ENCODE measurements at regions of chr1 and their contacts with region 1.

Region 1: GRCh38 chr1:67766141-67766978 is 66.9 kb downstream of the GNG12 start:
- DNase-seq: no peak
- H3K4me3 ChIP-seq: peak overlapping the region; percentile 24 to 50 (median 40)
- H3K27ac ChIP-seq: peak overlapping the region; percentile 54 to 68 (median 64)
- H3K4me1 ChIP-seq: peaks cover 17 to 56% (median 39%) of the 10 kb centered on the region in 4 donors
- H3K27me3 ChIP-seq: no peaks in the 10 kb centered on the region
- CTCF ChIP-seq: peak; percentile 78 to 80 (median 78)
- EP300 ChIP-seq: no peak
- POLR2A ChIP-seq: no peak

Region 2: DNA sequence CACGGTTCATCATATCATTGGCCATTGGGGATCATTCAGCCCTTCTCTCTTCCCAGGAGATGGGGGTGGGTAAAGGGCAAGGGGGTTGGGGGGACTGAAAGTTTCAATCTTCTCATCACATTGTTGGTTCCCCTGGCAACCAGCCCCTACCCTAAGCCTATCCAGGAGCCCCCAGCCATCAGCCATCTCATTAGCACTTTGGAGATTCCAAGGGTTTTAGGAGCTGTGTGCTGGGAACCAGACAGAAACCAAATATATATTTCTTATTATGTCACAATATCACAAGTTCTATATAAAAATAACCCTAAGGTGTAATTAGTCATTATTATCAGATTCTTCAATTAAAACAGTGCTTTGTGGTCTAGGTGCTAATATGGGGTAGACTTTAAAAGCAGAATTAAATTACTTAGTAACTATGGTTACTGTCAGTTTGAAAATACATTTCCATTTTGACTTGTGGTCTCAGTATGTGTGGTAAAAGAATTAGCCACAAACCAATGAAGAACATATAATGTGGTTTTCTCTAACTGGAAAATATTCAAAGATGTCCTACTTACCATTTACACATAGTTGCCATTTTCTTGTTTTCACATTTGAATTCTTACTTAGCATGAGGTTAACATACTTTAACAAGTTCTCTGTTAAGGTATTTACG is 572.0 kb before region 1 on chr1:
- intact Hi-C with region 1: no loop called
- DNase-seq: no peak
- H3K4me3 ChIP-seq: no peak overlapping the region
- H3K27ac ChIP-seq: no peak overlapping the region
- H3K4me1 ChIP-seq: no peaks in the 10 kb centered on the region
- H3K27me3 ChIP-seq: no peaks in the 10 kb centered on the region
- CTCF ChIP-seq: no peak
- EP300 ChIP-seq: no peak
- POLR2A ChIP-seq: no peak

Region 3: GRCh38 chr1:67832737-67833601 is 66.6 kb after region 1 on chr1 and contains the start of gene GNG12:
- intact Hi-C with region 1: loop called (anchors 5 kb)
- DNase-seq: no peak
- H3K4me3 ChIP-seq: peak within 1 kb of the TSS; percentile 70 to 91 (median 80)
- H3K27ac ChIP-seq: peak within 1 kb of the TSS; percentile 91 to 93 (median 92)
- H3K4me1 ChIP-seq: peaks cover 16 to 34% (median 23%) of the 10 kb centered on the region in 4 donors
- H3K27me3 ChIP-seq: no peaks in the 10 kb centered on the region
- CTCF ChIP-seq: no peak
- EP300 ChIP-seq: no peak
- POLR2A ChIP-seq: no peak
- total RNA-seq, gene GNG12: 108 to 118 (median 111) TPM

Region 4: GRCh38 chr1:67853704-67854103 is 87.3 kb after region 1 on chr1:
- intact Hi-C with region 1: loop called (anchors 5 kb)
- DNase-seq: no peak
- H3K4me3 ChIP-seq: no peak overlapping the region
- H3K27ac ChIP-seq: no peak overlapping the region
- H3K4me1 ChIP-seq: peaks cover 8 to 27% (median 17%) of the 10 kb centered on the region in 4 donors
- H3K27me3 ChIP-seq: no peaks in the 10 kb centered on the region
- CTCF ChIP-seq: peak; percentile 54 to 70 (median 56)
- EP300 ChIP-seq: no peak
- POLR2A ChIP-seq: no peak

Region 5: DNA sequence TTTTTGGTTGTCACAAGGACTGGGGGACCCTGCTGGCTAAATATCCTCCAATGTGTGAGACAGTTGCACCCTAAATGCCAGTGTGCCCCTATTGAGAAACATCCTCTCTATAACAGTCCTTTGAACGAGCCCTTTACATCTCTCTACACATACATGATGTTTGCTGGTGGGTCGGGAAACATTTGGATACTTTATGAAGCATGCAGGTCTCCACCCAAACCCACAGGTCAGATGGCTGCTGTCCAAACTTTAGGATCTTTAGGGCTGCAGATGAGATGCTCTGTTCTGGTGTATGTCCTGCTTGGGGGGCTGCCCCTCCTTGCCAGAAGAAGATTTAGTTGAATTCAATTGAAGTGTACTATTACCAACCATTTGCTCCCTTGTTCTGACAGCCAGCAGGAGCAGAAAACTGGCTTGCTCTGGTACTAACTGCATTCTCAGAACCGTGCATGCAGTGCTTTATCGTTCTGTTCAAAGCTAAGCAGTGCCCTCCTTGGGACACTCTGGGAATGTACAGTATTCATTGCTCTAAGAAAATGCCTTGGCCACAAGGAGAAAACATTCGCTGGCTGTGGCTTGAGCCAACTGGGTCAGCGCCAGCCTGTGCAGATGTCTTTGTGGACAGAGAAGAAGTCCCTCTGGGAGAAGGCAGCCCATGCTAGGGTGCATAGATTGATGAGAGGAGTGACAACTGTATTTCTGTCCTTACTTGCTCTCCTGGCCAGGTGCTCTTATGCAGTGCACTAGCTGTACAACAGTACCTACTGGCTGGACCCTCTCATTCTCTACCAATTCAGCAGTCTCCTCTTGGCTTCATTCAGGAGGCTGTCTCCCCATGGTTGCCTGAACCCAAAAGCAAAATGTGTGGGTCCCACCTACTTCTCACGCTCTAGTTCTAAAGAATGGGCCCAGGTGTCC is 345.4 kb after region 1 on chr1:
- intact Hi-C with region 1: loop called (anchors 5 kb)
- DNase-seq: peak; percentile 92
- H3K4me3 ChIP-seq: no peak overlapping the region
- H3K27ac ChIP-seq: peak overlapping the region in 3 of 4 donors; percentile 24 to 53 (median 49)
- H3K4me1 ChIP-seq: peaks cover 16 to 34% (median 27%) of the 10 kb centered on the region in 4 donors
- H3K27me3 ChIP-seq: no peaks in the 10 kb centered on the region
- CTCF ChIP-seq: peak; percentile 64 to 81 (median 70)
- EP300 ChIP-seq: no peak
- POLR2A ChIP-seq: no peak

Region 6: GRCh38 chr1:68173911-68174737 is 407.8 kb after region 1 on chr1:
- intact Hi-C with region 1: no loop called
- DNase-seq: no peak
- H3K4me3 ChIP-seq: peak overlapping the region; percentile 21 to 39 (median 27)
- H3K27ac ChIP-seq: peak overlapping the region; percentile 75 to 82 (median 78)
- H3K4me1 ChIP-seq: peaks cover 57 to 85% (median 81%) of the 10 kb centered on the region in 4 donors
- H3K27me3 ChIP-seq: no peaks in the 10 kb centered on the region
- CTCF ChIP-seq: no peak
- EP300 ChIP-seq: no peak
- POLR2A ChIP-seq: no peak

Region 7: DNA sequence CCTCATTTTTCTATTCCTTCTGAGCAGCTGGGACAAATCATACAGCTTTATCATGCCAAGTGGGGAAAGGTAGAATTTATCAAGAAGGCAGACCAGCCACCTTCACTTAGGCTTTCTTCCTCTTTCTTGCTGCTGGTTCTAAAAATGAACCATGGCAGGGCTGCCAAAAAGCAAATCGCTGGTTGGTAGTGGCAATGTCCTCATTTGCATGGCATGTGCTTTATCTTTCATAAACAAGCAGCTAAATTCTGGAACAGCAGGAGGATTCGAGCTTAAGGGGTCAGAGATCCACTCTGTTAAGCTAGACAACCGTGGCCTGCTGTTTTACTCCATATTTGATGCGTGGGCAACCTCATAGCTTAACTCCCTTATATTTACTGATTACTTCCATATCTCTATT is 592.1 kb after region 1 on chr1:
- intact Hi-C with region 1: no loop called
- DNase-seq: no peak
- H3K4me3 ChIP-seq: no peak overlapping the region
- H3K27ac ChIP-seq: no peak overlapping the region
- H3K4me1 ChIP-seq: peaks cover 6 to 18% (median 15%) of the 10 kb centered on the region in 4 donors
- H3K27me3 ChIP-seq: no peaks in the 10 kb centered on the region
- CTCF ChIP-seq: no peak
- EP300 ChIP-seq: no peak
- POLR2A ChIP-seq: no peak

Measured in esophagus muscularis mucosa (tissue), 4 donors.